AG04449 (cell line): ENCODE measurements at regions of chr6 and their contacts with region 1.

Region 1: DNA sequence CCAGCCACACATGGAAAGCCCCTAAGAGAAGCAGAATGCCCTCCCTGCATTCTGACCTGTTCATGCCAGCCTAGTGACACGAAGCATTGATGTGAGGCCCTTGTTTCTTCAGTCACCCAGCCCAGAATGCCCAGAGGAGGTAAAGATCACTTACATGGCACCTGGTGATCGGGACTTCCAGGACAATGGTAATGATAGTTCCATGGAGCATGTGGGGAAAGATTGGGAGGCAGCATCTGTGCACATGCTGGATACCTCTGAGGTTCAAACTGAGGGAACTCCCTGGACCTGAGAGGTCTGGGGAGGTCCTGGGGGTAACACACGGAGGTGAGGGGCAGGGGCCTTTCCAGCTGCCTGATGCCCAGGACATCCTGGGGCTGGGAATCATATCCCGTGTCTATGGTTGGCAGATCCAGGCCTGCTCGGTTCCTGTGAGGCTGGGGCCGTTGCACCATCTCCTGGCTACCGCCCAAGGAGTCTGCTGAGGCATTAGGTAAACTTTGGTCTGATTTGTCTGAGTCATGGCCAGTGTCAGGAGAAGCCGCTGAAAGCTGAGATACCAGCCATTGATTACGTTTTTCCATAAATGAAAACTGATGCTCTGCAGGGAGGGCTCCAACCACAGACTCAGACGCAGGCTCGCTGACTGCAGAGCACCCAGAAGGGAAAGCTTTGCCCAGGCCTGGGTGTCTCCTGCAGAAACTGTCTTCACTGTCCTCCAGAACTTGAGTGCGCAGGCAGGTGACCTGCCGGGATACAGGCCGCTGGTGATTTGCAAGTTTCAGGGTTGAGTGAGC is 14.4 kb downstream of the TRAF3IP2 start:
- DNase-seq: peak; percentile 98
- H3K4me3 ChIP-seq: peak overlapping the region; percentile 23; the same call in 1 of the 2 replicates
- CTCF ChIP-seq: no peak

Region 2: GRCh38 chr6:111565326-111566221 is 25.7 kb before region 1 on chr6:
- CTCF ChIA-PET with region 1: no interaction called
- POLR2A ChIA-PET with region 1: no interaction called
- DNase-seq: no peak
- H3K4me3 ChIP-seq: no peak overlapping the region
- CTCF ChIP-seq: no peak

Region 3: GRCh38 chr6:111605100-111605751 is 13.9 kb after region 1 on chr6:
- CTCF ChIA-PET with region 1: interaction called, 5 read pairs
- POLR2A ChIA-PET with region 1: interaction called, 14 read pairs
- DNase-seq: no peak
- H3K4me3 ChIP-seq: peak overlapping the region; percentile 65
- CTCF ChIP-seq: no peak